Panc1 (cell line): ENCODE measurements at regions of chr3 and their contacts with region 1.

Region 1: DNA sequence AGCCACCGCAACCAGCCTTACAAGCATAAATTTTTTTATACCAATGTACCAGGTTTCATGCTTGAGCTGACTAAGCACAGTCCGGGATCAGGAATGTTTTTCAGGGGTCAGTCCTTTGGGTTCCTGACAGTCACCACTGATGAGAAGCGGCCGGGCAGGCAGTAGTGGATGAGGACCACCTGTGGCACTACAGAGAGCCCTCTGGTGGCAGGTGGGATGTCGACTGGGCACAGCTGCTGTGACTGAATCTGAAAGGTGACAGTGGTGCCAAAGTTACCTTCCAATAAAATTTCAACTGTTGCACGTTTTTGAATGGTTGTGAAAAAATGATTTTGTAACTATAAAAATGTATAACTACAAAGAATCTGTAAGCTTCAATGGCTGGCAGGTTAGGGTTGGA is 34.0 kb downstream of the TPRA1 start:
- DNase-seq: no peak
- ATAC-seq: no peak
- H3K4me3 ChIP-seq: no peak overlapping the region
- H3K27ac ChIP-seq: no peak overlapping the region
- H3K4me1 ChIP-seq: no peaks in the 10 kb centered on the region
- H3K27me3 ChIP-seq: no peaks in the 10 kb centered on the region
- CTCF ChIP-seq: peak; percentile 75

Region 2: GRCh38 chr3:126456211-126456610 is 1100.4 kb before region 1 on chr3:
- CTCF ChIA-PET with region 1: no interaction called
- POLR2A ChIA-PET with region 1: interaction called, 15 read pairs
- in situ Hi-C with region 1: no loop called
- intact Hi-C with region 1: no loop called
- DNase-seq: no peak
- ATAC-seq: peak; percentile 50; the same call in 1 of the 2 replicates
- H3K4me3 ChIP-seq: no peak overlapping the region
- H3K27ac ChIP-seq: no peak overlapping the region
- H3K4me1 ChIP-seq: no peaks in the 10 kb centered on the region
- H3K27me3 ChIP-seq: no peaks in the 10 kb centered on the region
- CTCF ChIP-seq: no peak

Region 3: GRCh38 chr3:127458696-127459604 is 97.6 kb before region 1 on chr3:
- CTCF ChIA-PET with region 1: no interaction called
- POLR2A ChIA-PET with region 1: no interaction called
- in situ Hi-C with region 1: no loop called
- intact Hi-C with region 1: no loop called
- DNase-seq: no peak
- ATAC-seq: no peak
- H3K4me3 ChIP-seq: no peak overlapping the region
- H3K27ac ChIP-seq: no peak overlapping the region
- H3K4me1 ChIP-seq: peaks cover 11% of the 10 kb centered on the region
- H3K27me3 ChIP-seq: no peaks in the 10 kb centered on the region; the same call in 1 of the 2 replicates
- CTCF ChIP-seq: no peak

Region 4: DNA sequence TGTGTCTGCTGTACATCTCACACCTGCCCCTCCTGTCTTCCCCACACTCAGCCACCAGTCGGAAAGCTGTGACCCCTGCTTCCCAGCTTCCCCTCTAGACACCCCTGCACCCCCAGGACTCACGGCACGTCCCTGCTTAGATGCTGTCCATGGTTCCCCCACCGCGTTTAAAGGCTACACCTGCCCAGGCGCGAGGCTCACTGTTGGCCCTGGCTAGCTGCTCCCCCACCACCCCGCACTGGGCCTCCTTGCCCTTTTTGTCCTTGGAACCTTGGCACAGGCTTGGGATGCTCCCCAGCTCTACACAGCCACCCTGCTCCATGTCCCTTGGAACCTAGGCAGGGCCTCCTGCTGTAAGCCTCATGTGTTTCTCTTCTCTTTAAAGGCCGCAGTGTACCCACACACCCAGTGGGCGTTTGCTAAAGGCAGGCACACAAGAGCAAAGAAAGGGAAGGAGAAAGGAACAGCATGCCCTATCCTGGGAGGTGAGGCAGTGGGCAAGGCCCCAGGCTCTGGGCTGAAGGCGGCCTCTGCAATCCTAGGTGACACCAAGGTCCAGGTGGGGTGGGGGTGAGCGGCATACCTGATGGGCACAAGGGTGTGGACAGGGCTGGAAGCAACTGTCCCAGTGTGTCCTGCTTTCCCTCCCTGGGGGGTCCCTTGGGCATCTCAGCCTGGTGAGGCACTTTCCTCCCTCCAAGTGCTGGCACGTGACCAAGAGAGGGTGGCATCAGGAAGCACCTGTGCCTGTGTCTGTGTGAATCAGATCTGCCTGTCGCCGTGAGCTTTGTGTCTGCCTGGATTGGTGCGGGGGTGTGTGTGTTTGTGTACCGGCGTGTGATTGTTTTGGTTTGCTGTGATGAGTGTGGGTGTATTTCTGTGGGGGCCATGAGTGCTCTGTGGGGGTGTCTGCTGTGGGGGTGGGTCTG is 20.4 kb before region 1 on chr3:
- CTCF ChIA-PET with region 1: interaction called, 10 read pairs
- POLR2A ChIA-PET with region 1: no interaction called
- in situ Hi-C with region 1: no loop called
- intact Hi-C with region 1: no loop called
- DNase-seq: no peak
- ATAC-seq: no peak
- H3K4me3 ChIP-seq: no peak overlapping the region
- H3K27ac ChIP-seq: no peak overlapping the region
- H3K4me1 ChIP-seq: no peaks in the 10 kb centered on the region
- H3K27me3 ChIP-seq: no peaks in the 10 kb centered on the region; the same call in 1 of the 2 replicates
- CTCF ChIP-seq: no peak